Endothelial cell of umbilical vein (primary cell): ENCODE measurements at regions of chr1 and their contacts with region 1.

Region 1: GRCh38 chr1:67685067-67685557 is at the start of gene GADD45A:
- DNase-seq: peak; percentile 99
- H3K4me3 ChIP-seq: peak within 1 kb of the TSS; percentile 77 to 85 (median 83)
- H3K27ac ChIP-seq: peak within 1 kb of the TSS; percentile 90
- H3K4me1 ChIP-seq: peaks cover 43% of the 10 kb centered on the region
- H3K27me3 ChIP-seq: no peaks in the 10 kb centered on the region
- CTCF ChIP-seq: no peak
- POLR2A ChIP-seq: peak; percentile 100
- total RNA-seq, gene GADD45A: 77.4 and 91.6 TPM in 2 replicates

Region 2: GRCh38 chr1:67126111-67126746 is 558.9 kb before region 1 on chr1:
- CTCF ChIA-PET with region 1: no interaction called
- POLR2A ChIA-PET with region 1: no interaction called
- dilution Hi-C with region 1: no loop called
- intact Hi-C with region 1: no loop called
- DNase-seq: peak; percentile 6
- H3K4me3 ChIP-seq: no peak overlapping the region
- H3K27ac ChIP-seq: no peak overlapping the region
- H3K4me1 ChIP-seq: no peaks in the 10 kb centered on the region
- H3K27me3 ChIP-seq: no peaks in the 10 kb centered on the region
- CTCF ChIP-seq: no peak
- POLR2A ChIP-seq: no peak

Region 3: GRCh38 chr1:67561704-67562113 is 123.4 kb before region 1 on chr1:
- CTCF ChIA-PET with region 1: interaction called, 72 read pairs
- POLR2A ChIA-PET with region 1: interaction called, 14 read pairs
- dilution Hi-C with region 1: no loop called
- intact Hi-C with region 1: loop called (anchors 1 kb)
- DNase-seq: peak; percentile 92
- H3K4me3 ChIP-seq: no peak overlapping the region
- H3K27ac ChIP-seq: no peak overlapping the region
- H3K4me1 ChIP-seq: peaks cover 11% of the 10 kb centered on the region
- H3K27me3 ChIP-seq: no peaks in the 10 kb centered on the region
- CTCF ChIP-seq: peak; percentile 85
- POLR2A ChIP-seq: no peak

Region 4: GRCh38 chr1:67618285-67619018 is 66.7 kb before region 1 on chr1:
- CTCF ChIA-PET with region 1: interaction called, 8 read pairs
- POLR2A ChIA-PET with region 1: interaction called, 16 read pairs
- dilution Hi-C with region 1: no loop called
- intact Hi-C with region 1: loop called (anchors 1 kb)
- DNase-seq: peak; percentile 99
- H3K4me3 ChIP-seq: no peak overlapping the region
- H3K27ac ChIP-seq: peak overlapping the region; percentile 92
- H3K4me1 ChIP-seq: peaks cover 24% of the 10 kb centered on the region
- H3K27me3 ChIP-seq: no peaks in the 10 kb centered on the region
- CTCF ChIP-seq: no peak
- POLR2A ChIP-seq: peak; percentile 41

Region 5: GRCh38 chr1:67664048-67664447 is 21.1 kb before region 1 on chr1:
- CTCF ChIA-PET with region 1: no interaction called
- POLR2A ChIA-PET with region 1: no interaction called
- dilution Hi-C with region 1: no loop called
- intact Hi-C with region 1: no loop called
- DNase-seq: peak; percentile 53
- H3K4me3 ChIP-seq: no peak overlapping the region
- H3K27ac ChIP-seq: peak overlapping the region; percentile 25
- H3K4me1 ChIP-seq: peaks cover 12% of the 10 kb centered on the region
- H3K27me3 ChIP-seq: no peaks in the 10 kb centered on the region
- CTCF ChIP-seq: no peak
- POLR2A ChIP-seq: no peak

Region 6: GRCh38 chr1:67700692-67701410 is 15.7 kb after region 1 on chr1:
- CTCF ChIA-PET with region 1: interaction called, 11 read pairs
- POLR2A ChIA-PET with region 1: interaction called, 3 read pairs
- dilution Hi-C with region 1: no loop called
- intact Hi-C with region 1: no loop called
- DNase-seq: peak; percentile 88
- H3K4me3 ChIP-seq: no peak overlapping the region
- H3K27ac ChIP-seq: peak overlapping the region; percentile 38
- H3K4me1 ChIP-seq: peaks cover 6% of the 10 kb centered on the region
- H3K27me3 ChIP-seq: no peaks in the 10 kb centered on the region
- CTCF ChIP-seq: peak in 1 of 2 donors; percentile 50
- POLR2A ChIP-seq: no peak

Region 7: DNA sequence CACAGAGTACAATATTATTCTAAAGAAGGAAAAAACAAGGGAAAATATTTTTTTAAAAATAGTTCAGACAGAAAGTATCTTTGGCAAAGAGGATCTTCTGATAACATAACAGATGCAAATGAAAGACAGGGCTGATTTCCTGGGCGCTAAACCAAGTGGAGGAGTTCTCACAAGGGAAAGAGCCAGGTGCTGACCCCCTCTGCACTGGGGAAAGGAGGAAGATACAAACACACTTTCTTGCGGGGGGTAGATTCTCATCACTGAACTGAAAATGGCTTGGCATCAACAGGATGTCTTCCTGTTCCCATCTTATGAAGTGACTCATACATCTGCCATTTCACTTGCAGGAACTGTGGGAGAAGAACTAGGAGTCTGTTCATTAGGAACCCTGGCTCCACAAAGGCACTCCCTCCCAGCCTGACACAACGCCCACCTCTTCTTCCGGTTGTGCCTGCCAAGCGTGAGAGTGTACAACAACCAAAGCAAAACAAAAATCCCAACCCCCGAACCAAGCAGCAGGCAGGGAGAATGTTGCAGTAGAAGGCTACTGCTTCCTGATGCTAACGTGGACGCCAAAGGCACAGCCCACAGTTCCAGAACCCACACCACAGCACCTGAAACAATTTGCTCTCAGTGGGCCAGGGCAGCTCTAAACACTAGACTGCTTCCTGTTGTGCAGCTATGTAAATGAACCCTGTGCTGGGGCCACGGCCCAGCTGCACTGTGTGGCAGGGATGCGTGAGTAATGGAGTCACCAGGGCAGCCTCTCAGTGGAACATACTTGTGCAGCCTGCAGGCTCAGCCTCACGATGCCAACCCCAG is 50.9 kb after region 1 on chr1:
- CTCF ChIA-PET with region 1: no interaction called
- POLR2A ChIA-PET with region 1: interaction called, 5 read pairs
- dilution Hi-C with region 1: no loop called
- intact Hi-C with region 1: loop called (anchors 1 kb)
- DNase-seq: peak; percentile 98
- H3K4me3 ChIP-seq: peak overlapping the region in 1 of 3 experiments; percentile 25
- H3K27ac ChIP-seq: peak overlapping the region; percentile 89
- H3K4me1 ChIP-seq: peaks cover 38% of the 10 kb centered on the region
- H3K27me3 ChIP-seq: no peaks in the 10 kb centered on the region
- CTCF ChIP-seq: no peak
- POLR2A ChIP-seq: no peak

Region 8: DNA sequence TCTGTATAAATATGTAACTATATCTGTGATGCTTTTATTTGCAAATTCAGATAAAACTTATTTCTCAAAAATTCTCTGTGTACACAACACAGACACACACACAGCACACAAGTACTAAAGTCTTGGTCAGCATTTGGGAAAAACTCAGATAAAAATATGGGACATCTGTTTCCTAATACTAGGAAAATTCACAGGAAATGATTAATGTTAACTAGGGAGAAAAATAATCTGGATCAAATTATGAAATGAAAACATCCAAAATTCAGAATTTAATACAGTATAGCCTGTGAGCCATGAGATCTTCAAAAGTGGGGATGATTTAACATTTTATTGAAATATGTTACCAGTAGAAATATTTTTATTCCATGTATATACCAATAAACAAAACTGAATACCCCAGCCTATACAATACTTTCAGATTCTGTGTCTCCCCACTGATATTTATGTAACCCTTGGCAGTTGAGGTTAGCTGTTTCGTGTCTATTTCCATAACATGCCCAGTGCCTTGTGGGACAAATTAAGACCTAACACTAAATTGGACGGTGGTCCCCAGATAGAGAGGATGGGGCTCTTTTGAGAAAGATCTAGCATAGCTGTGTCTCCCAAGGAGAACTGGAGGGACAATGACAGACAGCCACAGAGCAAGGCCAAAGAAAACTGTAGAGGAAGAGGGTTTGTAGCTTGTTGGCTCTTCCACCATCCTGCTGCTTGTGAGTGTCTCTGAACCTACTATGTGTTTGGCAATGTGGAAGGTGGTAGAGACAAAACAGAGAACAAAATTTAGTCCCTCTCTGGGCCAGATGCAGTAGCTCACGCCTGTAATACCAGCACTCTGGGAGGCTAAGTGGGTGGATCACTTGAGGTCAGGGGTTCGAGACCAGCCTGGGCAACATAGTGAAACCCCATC is 101.0 kb after region 1 on chr1:
- CTCF ChIA-PET with region 1: no interaction called
- POLR2A ChIA-PET with region 1: interaction called, 10 read pairs
- dilution Hi-C with region 1: no loop called
- intact Hi-C with region 1: no loop called
- DNase-seq: peak; percentile 84
- H3K4me3 ChIP-seq: no peak overlapping the region
- H3K27ac ChIP-seq: peak overlapping the region; percentile 91
- H3K4me1 ChIP-seq: peaks cover 61% of the 10 kb centered on the region
- H3K27me3 ChIP-seq: no peaks in the 10 kb centered on the region
- CTCF ChIP-seq: no peak
- POLR2A ChIP-seq: no peak

Region 9: DNA sequence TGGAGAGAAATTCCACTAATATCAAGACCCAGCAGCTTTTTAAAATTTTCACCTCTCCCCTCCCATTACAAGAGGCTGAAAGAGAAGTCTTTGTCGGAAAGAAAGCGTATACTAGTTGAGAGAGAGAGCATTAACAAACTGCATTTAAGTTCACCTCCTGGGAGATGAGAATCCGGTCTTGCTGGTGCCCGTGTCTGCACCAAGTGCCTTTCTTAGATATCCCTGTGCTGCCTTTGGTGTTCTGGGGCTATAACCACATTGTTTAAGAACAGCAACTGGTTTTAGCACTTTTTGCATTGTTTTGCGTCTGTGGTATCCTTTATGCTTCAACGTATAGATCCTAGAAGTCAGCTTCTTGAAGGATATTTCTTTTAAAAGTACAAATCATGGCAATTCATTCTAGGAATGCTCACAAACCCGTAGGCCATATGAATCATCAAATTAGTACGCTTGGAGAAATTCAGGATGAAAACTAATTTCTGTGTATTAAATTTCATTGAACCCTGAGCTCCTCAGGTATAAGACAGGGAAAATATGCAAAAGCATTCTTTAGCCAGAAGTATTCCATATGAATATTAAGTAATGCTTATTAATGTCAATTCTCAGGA is 768.0 kb after region 1 on chr1:
- CTCF ChIA-PET with region 1: no interaction called
- POLR2A ChIA-PET with region 1: interaction called, 11 read pairs
- dilution Hi-C with region 1: no loop called
- intact Hi-C with region 1: no loop called
- DNase-seq: no peak
- H3K4me3 ChIP-seq: no peak overlapping the region
- H3K27ac ChIP-seq: no peak overlapping the region
- H3K4me1 ChIP-seq: no peaks in the 10 kb centered on the region
- H3K27me3 ChIP-seq: no peaks in the 10 kb centered on the region
- CTCF ChIP-seq: no peak
- POLR2A ChIP-seq: no peak